Activated CD8-positive, alpha-beta T cell treated with anti-CD3 and anti-CD28 coated beads for 36 hours (primary cell): ENCODE measurements at regions of chr16 and their contacts with region 1.

Region 1: DNA sequence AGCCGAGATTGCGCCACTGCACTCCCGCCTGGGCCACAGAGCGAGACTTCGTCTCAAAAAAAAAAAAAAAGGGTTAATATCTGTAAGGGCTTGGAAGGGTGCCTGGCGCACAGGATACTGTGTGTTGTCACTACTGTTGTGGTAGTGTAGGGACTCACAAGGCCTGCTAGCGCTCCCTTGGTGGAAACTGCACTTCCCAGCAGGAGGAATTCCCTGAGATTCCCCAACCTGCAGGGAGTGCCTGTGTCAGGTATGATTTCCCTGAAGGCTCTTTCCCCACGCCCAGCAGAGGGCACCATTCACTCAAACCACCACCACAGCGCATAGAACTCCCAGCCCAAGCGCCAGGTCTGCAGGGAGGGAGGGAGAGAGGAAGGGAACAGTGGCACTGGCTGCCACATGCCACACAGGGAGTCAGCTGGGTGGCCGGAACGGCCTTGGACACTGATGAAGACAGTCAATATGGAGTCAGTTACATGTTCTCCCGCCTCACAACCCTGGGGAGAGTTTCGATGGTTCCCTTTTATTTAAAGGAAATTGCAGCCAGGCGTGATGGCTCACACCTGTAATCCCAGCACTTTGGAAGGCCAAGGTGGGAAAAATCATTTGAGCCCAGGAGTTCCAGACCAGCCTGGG is 32.7 kb upstream of the CDH1 start:
- DNase-seq: peak; percentile 77
- ATAC-seq: peak; percentile 75
- H3K4me3 Mint-ChIP-seq: no peak overlapping the region
- H3K27ac Mint-ChIP-seq: no peak overlapping the region
- H3K4me1 Mint-ChIP-seq: no peaks in the 10 kb centered on the region
- H3K27me3 Mint-ChIP-seq: no peaks in the 10 kb centered on the region
- CTCF ChIP-seq: peak; percentile 90

Region 2: DNA sequence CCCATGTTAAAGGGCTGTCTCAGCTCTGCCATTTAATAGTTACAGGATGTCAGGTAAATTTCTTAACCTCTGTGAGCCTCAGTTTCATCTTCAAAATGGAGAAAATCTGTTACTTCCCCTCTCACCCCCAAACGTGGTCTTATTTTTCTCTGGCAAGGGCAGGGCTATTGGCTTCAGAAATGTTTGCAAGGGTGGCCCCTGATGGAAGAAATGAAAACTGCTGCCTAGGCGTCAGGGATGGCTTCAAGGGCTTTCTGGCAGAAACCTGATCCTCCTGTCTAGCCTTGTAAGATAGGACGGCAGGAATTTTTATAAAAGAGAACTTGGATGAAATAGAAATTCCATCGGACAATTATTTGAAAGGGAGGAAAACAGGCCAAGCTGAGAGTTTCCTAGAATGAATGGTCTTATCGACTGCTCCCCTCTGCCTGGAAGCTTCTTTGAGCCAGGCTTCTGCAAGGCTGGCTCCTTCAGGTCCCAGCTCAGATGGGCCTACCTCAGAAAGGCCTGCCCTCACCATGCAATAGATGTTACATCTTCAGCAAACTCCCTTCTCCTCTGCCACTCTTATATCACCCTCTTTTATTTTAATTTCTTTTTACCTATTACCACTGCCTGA is 96.0 kb after region 1 on chr16:
- CTCF ChIA-PET with region 1: interaction called, 9 read pairs
- POLR2A ChIA-PET with region 1: no interaction called
- intact Hi-C with region 1: loop called (anchors 2 kb)
- DNase-seq: peak; percentile 70
- ATAC-seq: peak; percentile 92
- H3K4me3 Mint-ChIP-seq: no peak overlapping the region
- H3K27ac Mint-ChIP-seq: no peak overlapping the region
- H3K4me1 Mint-ChIP-seq: peaks cover 2% of the 10 kb centered on the region
- H3K27me3 Mint-ChIP-seq: no peaks in the 10 kb centered on the region
- CTCF ChIP-seq: peak; percentile 62

Region 3: GRCh38 chr16:68860978-68861892 is 156.9 kb after region 1 on chr16:
- CTCF ChIA-PET with region 1: no interaction called
- POLR2A ChIA-PET with region 1: no interaction called
- intact Hi-C with region 1: no loop called
- DNase-seq: no peak
- ATAC-seq: no peak
- H3K4me3 Mint-ChIP-seq: no peak overlapping the region
- H3K27ac Mint-ChIP-seq: no peak overlapping the region
- H3K4me1 Mint-ChIP-seq: no peaks in the 10 kb centered on the region
- H3K27me3 Mint-ChIP-seq: no peaks in the 10 kb centered on the region
- CTCF ChIP-seq: no peak